ENCODE measurements at regions of chr22 and their contacts with region 1.

Region 1: GRCh38 chr22:21807544-21808529 is 59.6 kb downstream of the MAPK1 start:
- DNase-seq: no peak
- ATAC-seq: no peak
- H3K4me3 ChIP-seq: no peak overlapping the region
- H3K27ac ChIP-seq: no peak overlapping the region
- H3K4me1 ChIP-seq: peaks cover 0 to 19% (median 7%) of the 10 kb centered on the region in 9 donors
- H3K27me3 ChIP-seq: no peaks in the 10 kb centered on the region
- CTCF ChIP-seq: no peak

Region 2: GRCh38 chr22:21629262-21630149 is 178.3 kb before region 1 on chr22 and contains the start of gene YDJC:
- intact Hi-C with region 1: no loop called
- DNase-seq: peak; percentile 92 to 94
- ATAC-seq: peak; percentile 96 to 98 (median 98)
- H3K4me3 ChIP-seq: peak within 1 kb of the TSS; percentile 75 to 100 (median 88)
- H3K27ac ChIP-seq: peak within 1 kb of the TSS in 9 of 10 donors; percentile 17 to 92 (median 71)
- H3K4me1 ChIP-seq: peaks cover 0 to 39% (median 25%) of the 10 kb centered on the region in 9 donors
- H3K27me3 ChIP-seq: no peaks in the 10 kb centered on the region
- CTCF ChIP-seq: peak in 7 of 9 donors; percentile 10 to 97 (median 37)
- total RNA-seq, gene YDJC: 2.3 to 6.1 (median 4.0) TPM

Region 3: GRCh38 chr22:21726650-21727049 is 81.2 kb before region 1 on chr22:
- intact Hi-C with region 1: loop called in 2 of 10 experiments (anchors 10 kb)
- DNase-seq: no peak
- ATAC-seq: peak in 1 of 8 donors; percentile 30
- H3K4me3 ChIP-seq: no peak overlapping the region
- H3K27ac ChIP-seq: no peak overlapping the region
- H3K4me1 ChIP-seq: no peaks in the 10 kb centered on the region
- H3K27me3 ChIP-seq: no peaks in the 10 kb centered on the region
- CTCF ChIP-seq: no peak